Mammary epithelial cell (primary cell): ENCODE measurements at regions of chr12 and their contacts with region 1.

Region 1: DNA sequence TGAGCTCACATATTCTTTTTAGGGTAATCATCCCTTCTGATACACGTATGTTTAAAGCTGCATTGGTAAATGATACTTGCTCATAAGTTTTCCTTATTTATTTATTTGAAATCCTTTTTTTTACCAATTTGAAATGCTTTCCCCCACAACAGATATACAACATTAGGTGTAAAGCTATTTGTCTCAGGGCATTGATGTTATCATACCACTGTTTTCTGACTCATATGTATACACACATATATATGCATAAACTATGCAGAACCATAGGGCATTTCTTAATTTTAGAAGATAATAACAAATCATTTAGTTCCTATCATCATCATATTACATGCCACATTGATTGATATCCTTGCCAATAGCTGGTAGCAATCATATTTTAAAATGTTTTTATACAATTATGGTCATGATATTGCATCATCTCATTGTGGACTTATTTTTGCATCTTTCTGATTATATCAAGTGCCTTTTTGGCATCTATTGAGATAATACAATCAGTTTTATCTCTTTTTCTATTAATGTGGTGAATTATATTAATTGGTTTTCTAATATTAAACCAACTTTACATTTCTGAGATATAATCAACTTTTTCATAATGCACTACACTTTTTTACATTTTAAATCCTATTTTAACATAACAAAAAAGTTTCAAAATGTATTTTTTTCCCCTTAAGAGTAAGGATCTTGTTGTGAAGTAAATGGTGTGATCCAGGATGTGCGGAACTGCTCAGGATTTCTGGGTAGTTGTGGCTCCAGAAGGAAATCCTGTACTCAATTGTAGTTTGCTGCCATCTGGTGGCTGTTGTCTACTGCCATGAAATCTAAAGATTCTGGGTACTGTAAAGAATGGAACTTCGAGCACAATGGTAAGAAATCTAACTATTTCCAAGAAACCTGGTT is 16.7 kb downstream of the OR9K2 start:
- DNase-seq: peak; percentile 44
- H3K4me3 ChIP-seq: no peak overlapping the region
- H3K27ac ChIP-seq: no peak overlapping the region
- H3K4me1 ChIP-seq: no peaks in the 10 kb centered on the region
- H3K27me3 ChIP-seq: no peaks in the 10 kb centered on the region
- CTCF ChIP-seq: peak; percentile 83 to 84

Region 2: DNA sequence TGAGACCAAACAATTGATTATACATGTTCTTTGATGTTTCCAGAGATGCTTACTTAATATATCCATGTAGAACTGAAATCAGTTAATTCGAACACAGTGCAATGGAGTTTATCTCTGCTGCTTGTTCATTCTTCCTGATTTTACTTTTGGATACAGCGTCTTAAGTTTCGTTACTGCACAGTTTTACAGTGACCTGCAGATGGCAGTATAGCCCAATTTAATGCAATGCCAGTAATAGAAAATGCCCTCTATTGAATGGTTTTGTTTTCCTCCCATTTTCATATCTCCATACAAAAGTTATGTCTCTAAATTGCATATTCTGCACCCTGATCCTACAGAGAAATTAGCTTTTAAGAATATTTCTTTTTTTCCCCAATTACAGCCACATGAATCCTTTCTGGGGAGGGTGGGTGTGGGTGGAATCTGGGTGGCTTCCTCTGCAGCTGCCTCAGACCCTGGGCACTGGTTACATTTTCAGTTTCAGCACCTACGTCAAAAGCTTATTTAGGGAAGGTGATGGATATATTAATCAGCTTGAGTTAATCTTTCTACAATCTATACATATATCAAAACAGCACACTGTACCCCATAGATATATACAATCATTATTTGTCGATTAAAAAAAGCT is 393.6 kb before region 1 on chr12:
- CTCF ChIA-PET with region 1: no interaction called
- dilution Hi-C with region 1: no loop called
- in situ Hi-C with region 1: no loop called
- intact Hi-C with region 1: loop called (anchors 2 kb)
- DNase-seq: peak; percentile 28
- H3K4me3 ChIP-seq: no peak overlapping the region
- H3K27ac ChIP-seq: no peak overlapping the region
- H3K4me1 ChIP-seq: no peaks in the 10 kb centered on the region
- H3K27me3 ChIP-seq: no peaks in the 10 kb centered on the region
- CTCF ChIP-seq: peak; percentile 66 to 76

Region 3: DNA sequence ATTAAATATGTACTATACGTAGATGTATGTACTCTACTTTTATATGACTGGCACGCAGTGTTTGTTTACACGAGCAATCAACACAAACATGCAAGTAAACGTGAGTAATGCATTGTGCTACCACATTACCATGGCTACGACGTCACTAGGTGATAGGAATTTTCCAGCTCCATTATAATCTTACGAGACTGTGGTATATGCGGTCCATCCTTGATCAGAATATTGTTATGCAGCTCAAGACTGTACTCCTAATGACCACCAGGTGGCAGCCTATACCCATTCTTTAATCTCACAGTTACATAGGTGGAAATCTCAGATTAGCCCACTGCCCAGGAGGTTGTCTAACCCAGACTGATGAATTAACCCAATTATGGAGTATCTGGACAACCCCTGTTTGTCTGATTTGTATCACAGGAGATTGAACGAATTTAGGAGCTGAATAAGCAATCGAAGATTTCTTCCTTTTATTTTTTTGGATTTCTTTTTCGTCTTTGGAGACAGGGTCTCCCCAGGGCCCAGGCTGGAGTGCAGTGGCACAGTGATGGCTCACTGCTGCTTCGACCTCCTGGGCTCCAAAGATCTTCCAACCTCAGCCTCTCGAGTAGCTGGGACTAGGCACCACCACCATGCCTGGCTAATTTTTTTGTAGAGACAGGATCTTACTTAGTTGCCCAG is 149.6 kb before region 1 on chr12:
- CTCF ChIA-PET with region 1: interaction called, 3 read pairs
- dilution Hi-C with region 1: no loop called
- in situ Hi-C with region 1: no loop called
- intact Hi-C with region 1: loop called (anchors 1 kb)
- DNase-seq: peak; percentile 41
- H3K4me3 ChIP-seq: no peak overlapping the region
- H3K27ac ChIP-seq: no peak overlapping the region
- H3K4me1 ChIP-seq: no peaks in the 10 kb centered on the region
- H3K27me3 ChIP-seq: no peaks in the 10 kb centered on the region
- CTCF ChIP-seq: peak; percentile 77 to 83